Activated naive CD4-positive, alpha-beta T cell treated with anti-CD3 and anti-CD28 coated beads, Interleukin-2, amount 10 ng/mL, durations not matched to agents 7 days and 5 days (primary cell): ENCODE measurements at regions of chr17 and their contacts with region 1.

Region 1: GRCh38 chr17:2386400-2387085 is 14.3 kb downstream of the MNT start:
- DNase-seq: no peak
- H3K4me3 Mint-ChIP-seq: no peak overlapping the region
- H3K27ac Mint-ChIP-seq: no peak overlapping the region
- H3K4me1 Mint-ChIP-seq: peaks cover 33% of the 10 kb centered on the region
- H3K27me3 Mint-ChIP-seq: no peaks in the 10 kb centered on the region

Region 2: DNA sequence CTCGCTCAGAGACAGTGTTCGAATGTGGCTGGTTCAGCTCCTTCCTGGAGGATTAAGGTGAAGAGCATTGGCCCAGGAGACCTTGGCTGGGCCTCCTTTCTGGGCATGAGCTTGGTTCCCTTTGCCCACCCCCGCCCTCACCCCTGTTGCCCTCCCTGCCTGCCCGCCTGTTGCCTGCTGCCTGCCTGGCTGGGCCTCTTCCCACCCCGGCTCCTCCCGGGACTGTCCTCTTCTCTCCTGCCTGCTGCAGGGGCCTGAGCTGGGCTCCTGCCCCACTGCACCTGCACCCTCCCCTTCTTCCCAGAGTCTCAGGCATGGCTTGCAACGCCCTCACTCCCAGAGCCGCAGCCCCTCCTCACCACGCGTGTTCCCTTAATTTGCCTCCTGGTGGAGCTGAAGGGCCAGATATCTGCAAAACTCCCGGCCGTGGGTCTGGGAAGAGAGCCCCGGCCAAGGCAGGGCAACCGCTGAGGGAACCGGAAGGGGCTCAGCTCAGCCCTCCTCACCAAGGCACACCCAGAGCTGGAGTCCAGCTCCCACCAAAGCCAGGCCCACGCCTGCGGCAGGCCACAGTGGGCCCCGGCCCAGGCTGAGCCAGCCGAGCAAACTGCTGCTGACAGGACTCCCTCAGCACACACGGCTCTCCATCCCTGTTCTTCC is 16.9 kb before region 1 on chr17:
- CTCF ChIA-PET with region 1: interaction called, 18 read pairs
- DNase-seq: no peak
- H3K4me3 Mint-ChIP-seq: no peak overlapping the region
- H3K27ac Mint-ChIP-seq: peak overlapping the region; percentile 73
- H3K4me1 Mint-ChIP-seq: no peaks in the 10 kb centered on the region
- H3K27me3 Mint-ChIP-seq: no peaks in the 10 kb centered on the region

Region 3: DNA sequence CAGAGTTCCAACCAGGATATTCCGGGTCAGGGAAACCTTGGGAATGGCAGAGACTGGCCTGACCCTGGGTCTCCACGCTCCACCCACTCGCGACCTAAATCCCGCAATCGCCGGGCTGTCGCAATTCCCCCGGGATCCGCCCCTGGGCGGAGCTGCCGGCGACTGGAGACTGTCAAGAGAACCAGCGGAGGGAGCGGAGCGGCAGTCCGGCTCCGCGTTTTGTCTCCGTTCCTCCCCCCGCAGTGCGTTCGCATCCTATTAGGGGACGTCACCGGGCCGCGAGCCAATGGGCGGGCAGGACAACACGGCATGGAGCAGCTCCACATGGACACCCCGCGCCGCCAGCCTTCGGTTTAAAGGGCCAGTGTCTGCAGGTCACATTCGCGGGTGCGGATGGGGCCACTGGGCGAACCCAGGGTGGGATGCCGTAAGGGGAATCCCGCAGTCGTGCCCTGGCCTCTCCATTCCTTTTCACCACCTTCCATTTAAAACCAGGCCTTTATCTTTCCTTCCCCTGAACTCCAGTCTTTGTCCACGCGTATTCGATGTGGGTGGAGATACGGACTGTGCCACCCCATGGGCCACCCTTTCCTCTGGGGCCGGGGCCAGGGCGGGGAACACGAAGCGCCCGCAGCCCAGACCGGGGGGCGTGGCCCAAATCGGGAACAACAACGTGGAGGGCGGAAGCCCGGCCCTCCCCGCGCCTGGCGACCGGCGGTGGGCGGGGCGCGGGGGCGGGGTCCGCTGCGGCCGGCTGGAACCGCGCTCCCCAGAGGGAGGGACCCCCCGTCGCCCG is 15.1 kb after region 1 on chr17:
- CTCF ChIA-PET with region 1: interaction called, 467 read pairs
- DNase-seq: peak; percentile 99
- H3K4me3 Mint-ChIP-seq: peak overlapping the region; percentile 98
- H3K27ac Mint-ChIP-seq: peak overlapping the region; percentile 100
- H3K4me1 Mint-ChIP-seq: peaks cover 58% of the 10 kb centered on the region
- H3K27me3 Mint-ChIP-seq: peaks cover 6% of the 10 kb centered on the region

Region 4: DNA sequence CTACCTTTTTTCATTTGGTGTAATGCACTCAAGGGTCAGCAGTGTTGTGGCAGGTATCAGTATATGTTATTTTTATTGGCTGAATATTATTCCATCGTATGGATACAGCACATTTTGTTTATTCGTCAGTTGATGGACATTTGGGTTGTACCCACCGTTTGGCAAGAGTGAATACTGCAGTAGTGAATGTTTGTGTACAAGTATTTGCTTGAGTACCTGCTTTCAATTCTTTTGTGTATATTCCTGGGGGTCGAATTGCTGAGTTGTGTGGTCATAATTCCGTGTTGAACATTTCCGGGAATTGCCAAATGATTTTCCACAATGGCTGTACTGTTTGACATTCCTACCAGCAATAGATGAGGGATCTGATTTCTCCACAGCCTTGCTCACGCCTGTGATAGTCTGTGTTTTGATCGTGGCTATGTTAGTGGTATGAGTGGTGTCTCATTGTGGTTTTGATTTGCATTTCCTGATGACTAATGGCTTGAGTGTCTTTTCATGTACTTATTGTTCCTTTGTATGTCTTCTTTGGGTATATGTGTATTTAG is 568.4 kb after region 1 on chr17:
- CTCF ChIA-PET with region 1: no interaction called
- DNase-seq: no peak
- H3K4me3 Mint-ChIP-seq: no peak overlapping the region
- H3K27ac Mint-ChIP-seq: no peak overlapping the region
- H3K4me1 Mint-ChIP-seq: peaks cover 11% of the 10 kb centered on the region
- H3K27me3 Mint-ChIP-seq: peaks cover 12% of the 10 kb centered on the region